Endothelial cell of umbilical vein (primary cell): ENCODE measurements at regions of chr9 and their contacts with region 1.

Region 1: GRCh38 chr9:98315551-98316060 is 60.2 kb upstream of the TBC1D2 start:
- DNase-seq: peak; percentile 82
- H3K4me3 ChIP-seq: no peak overlapping the region
- H3K27ac ChIP-seq: no peak overlapping the region
- H3K4me1 ChIP-seq: peaks cover 16% of the 10 kb centered on the region
- H3K27me3 ChIP-seq: no peaks in the 10 kb centered on the region
- CTCF ChIP-seq: peak; percentile 91 to 93
- POLR2A ChIP-seq: no peak

Region 2: DNA sequence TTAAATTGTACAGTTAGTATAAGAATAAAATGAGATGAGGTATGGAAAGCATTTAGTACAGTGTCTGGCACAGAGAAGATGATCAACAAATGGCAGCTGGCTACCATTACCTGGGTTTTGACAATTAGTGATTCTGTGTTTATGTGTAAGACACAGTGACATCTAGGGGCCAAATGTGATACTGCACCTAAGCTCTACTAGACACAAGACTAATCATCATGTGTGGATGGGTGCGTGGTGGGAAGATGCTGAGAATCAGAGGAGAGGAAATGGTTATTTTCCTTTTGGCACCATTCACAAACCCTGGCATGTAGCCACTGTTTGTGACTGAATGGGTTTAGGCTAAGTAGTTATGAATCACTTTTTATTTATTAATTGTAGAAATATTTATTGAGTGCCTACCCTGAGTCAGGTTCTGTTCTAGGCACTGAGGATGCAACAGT is 49.6 kb after region 1 on chr9:
- CTCF ChIA-PET with region 1: interaction called, 36 read pairs
- POLR2A ChIA-PET with region 1: no interaction called
- dilution Hi-C with region 1: no loop called
- intact Hi-C with region 1: loop called (anchors 1 kb)
- DNase-seq: peak; percentile 85
- H3K4me3 ChIP-seq: no peak overlapping the region
- H3K27ac ChIP-seq: no peak overlapping the region
- H3K4me1 ChIP-seq: peaks cover 4% of the 10 kb centered on the region
- H3K27me3 ChIP-seq: no peaks in the 10 kb centered on the region
- CTCF ChIP-seq: peak; percentile 49 to 72
- POLR2A ChIP-seq: no peak

Region 3: GRCh38 chr9:98429613-98430012 is 114.0 kb after region 1 on chr9:
- CTCF ChIA-PET with region 1: no interaction called
- POLR2A ChIA-PET with region 1: no interaction called
- dilution Hi-C with region 1: no loop called
- intact Hi-C with region 1: loop called (anchors 5 kb)
- DNase-seq: no peak
- H3K4me3 ChIP-seq: no peak overlapping the region
- H3K27ac ChIP-seq: no peak overlapping the region
- H3K4me1 ChIP-seq: no peaks in the 10 kb centered on the region
- H3K27me3 ChIP-seq: no peaks in the 10 kb centered on the region
- CTCF ChIP-seq: no peak
- POLR2A ChIP-seq: no peak

Region 4: DNA sequence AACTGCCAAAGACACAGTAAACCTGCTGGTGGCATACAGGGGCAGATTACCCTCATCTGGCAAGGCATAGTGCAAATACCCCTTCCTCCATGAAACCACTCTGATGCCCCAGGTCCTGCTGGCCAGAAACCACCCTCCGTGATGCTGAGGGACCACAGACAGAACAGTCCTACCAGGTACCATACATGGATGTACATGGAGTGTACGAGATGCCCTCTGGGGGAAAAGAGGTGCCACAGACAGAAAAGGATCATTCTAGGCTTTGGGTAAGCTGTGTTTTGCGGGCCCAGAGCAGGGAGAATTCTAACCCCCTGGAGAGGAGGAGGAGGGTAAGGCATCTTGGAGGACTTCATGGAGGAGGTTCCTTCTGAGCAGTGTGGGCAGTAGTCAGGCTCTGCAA is 324.8 kb after region 1 on chr9:
- CTCF ChIA-PET with region 1: no interaction called
- POLR2A ChIA-PET with region 1: no interaction called
- dilution Hi-C with region 1: no loop called
- intact Hi-C with region 1: loop called (anchors 1 kb)
- DNase-seq: no peak
- H3K4me3 ChIP-seq: no peak overlapping the region
- H3K27ac ChIP-seq: no peak overlapping the region
- H3K4me1 ChIP-seq: no peaks in the 10 kb centered on the region
- H3K27me3 ChIP-seq: no peaks in the 10 kb centered on the region
- CTCF ChIP-seq: no peak
- POLR2A ChIP-seq: no peak

Region 5: GRCh38 chr9:98796364-98797101 is 480.9 kb after region 1 on chr9 and contains the start of gene ANKS6:
- CTCF ChIA-PET with region 1: interaction called, 4 read pairs
- POLR2A ChIA-PET with region 1: no interaction called
- dilution Hi-C with region 1: no loop called
- intact Hi-C with region 1: loop called (anchors 1 kb)
- DNase-seq: peak; percentile 60
- H3K4me3 ChIP-seq: peak within 1 kb of the TSS; percentile 57 to 90 (median 73)
- H3K27ac ChIP-seq: peak within 1 kb of the TSS; percentile 32
- H3K4me1 ChIP-seq: peaks cover 16% of the 10 kb centered on the region
- H3K27me3 ChIP-seq: peaks cover 3 to 6% of the 10 kb centered on the region in 2 experiments
- CTCF ChIP-seq: peak; percentile 30 to 53
- POLR2A ChIP-seq: no peak
- total RNA-seq, gene ANKS6: 18.6 and 22.3 TPM in 2 replicates